Vagina (tissue), 2 donors: ENCODE measurements at regions of chr11 and their contacts with region 1.

Region 1: GRCh38 chr11:58629857-58630256 is 7.4 kb downstream of the CNTF start:
- DNase-seq: no peak
- H3K4me3 ChIP-seq: no peak overlapping the region
- H3K27ac ChIP-seq: no peak overlapping the region
- H3K4me1 ChIP-seq: peaks cover 19% of the 10 kb centered on the region
- H3K27me3 ChIP-seq: no peaks in the 10 kb centered on the region
- CTCF ChIP-seq: no peak
- POLR2A ChIP-seq: no peak

Region 2: DNA sequence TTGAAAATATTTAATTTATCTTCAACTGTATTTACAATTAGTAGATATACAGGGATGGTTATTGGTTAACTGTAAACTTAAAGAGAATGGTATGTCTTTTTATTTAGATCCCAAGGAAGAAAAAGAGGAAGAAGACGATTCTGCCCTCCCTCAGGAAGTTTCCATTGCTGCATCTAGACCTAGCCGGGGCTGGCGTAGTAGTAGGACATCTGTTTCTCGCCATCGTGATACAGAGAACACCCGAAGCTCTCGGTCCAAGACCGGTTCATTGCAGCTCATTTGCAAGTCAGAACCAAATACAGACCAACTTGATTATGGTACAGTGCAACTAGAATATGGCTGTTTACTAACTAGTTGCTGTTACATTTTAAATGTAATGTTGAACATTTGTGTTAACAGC is 20.1 kb before region 1 on chr11:
- intact Hi-C with region 1: loop called (anchors 1 kb)
- DNase-seq: no peak
- H3K4me3 ChIP-seq: no peak overlapping the region
- H3K27ac ChIP-seq: no peak overlapping the region
- H3K4me1 ChIP-seq: peaks cover 10% of the 10 kb centered on the region
- H3K27me3 ChIP-seq: no peaks in the 10 kb centered on the region
- CTCF ChIP-seq: no peak
- POLR2A ChIP-seq: no peak

Region 3: DNA sequence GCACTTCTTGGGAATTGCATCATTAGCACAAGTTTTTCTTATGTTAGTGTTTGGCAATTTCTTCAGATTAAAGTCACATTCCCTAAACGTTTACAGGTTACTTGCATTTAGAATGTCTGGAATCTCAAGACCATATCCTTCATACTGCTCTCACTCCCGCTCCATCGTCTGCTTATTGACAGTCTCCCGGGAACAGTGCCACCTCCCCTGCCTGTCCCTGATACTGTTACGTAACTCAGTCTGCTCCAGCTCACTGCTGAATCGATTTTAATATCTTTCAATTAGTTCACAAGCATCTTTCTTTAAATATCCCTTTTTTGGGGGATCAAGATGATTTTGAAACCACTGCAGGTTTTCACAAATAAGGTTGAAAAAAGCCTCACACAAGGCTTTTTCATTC is 166.5 kb after region 1 on chr11:
- intact Hi-C with region 1: no loop called
- DNase-seq: no peak
- H3K4me3 ChIP-seq: no peak overlapping the region
- H3K27ac ChIP-seq: no peak overlapping the region
- H3K4me1 ChIP-seq: no peaks in the 10 kb centered on the region
- H3K27me3 ChIP-seq: no peaks in the 10 kb centered on the region
- CTCF ChIP-seq: no peak
- POLR2A ChIP-seq: no peak